Esophagus muscularis mucosa (tissue), 4 donors: ENCODE measurements at regions of chr19 and their contacts with region 1.

Region 1: GRCh38 chr19:18588611-18589379 is at the start of gene REX1BD:
- DNase-seq: peak; percentile 96
- H3K4me3 ChIP-seq: peak within 1 kb of the TSS; percentile 68 to 96 (median 86)
- H3K27ac ChIP-seq: peak within 1 kb of the TSS; percentile 78 to 89 (median 86)
- H3K4me1 ChIP-seq: peaks cover 14 to 38% (median 31%) of the 10 kb centered on the region in 4 donors
- H3K27me3 ChIP-seq: no peaks in the 10 kb centered on the region
- CTCF ChIP-seq: peak; percentile 76 to 87 (median 79)
- EP300 ChIP-seq: no peak
- POLR2A ChIP-seq: no peak
- total RNA-seq, gene REX1BD: 56.1 to 77.7 (median 67.0) TPM

Region 2: GRCh38 chr19:18542936-18543815 is 45.6 kb before region 1 on chr19 and contains the start of gene FKBP8:
- intact Hi-C with region 1: no loop called
- DNase-seq: peak; percentile 97
- H3K4me3 ChIP-seq: peak within 1 kb of the TSS; percentile 78 to 95 (median 86)
- H3K27ac ChIP-seq: peak within 1 kb of the TSS; percentile 93 to 96 (median 94)
- H3K4me1 ChIP-seq: peaks cover 13 to 25% (median 24%) of the 10 kb centered on the region in 4 donors
- H3K27me3 ChIP-seq: no peaks in the 10 kb centered on the region
- CTCF ChIP-seq: no peak
- EP300 ChIP-seq: no peak
- POLR2A ChIP-seq: no peak
- total RNA-seq, gene FKBP8: 420 to 568 (median 430) TPM

Region 3: GRCh38 chr19:18557474-18558201 is 31.2 kb before region 1 on chr19 and contains the start of gene KXD1:
- intact Hi-C with region 1: no loop called
- DNase-seq: peak; percentile 99
- H3K4me3 ChIP-seq: peak within 1 kb of the TSS; percentile 77 to 95 (median 92)
- H3K27ac ChIP-seq: peak within 1 kb of the TSS; percentile 94 to 99 (median 98)
- H3K4me1 ChIP-seq: peaks cover 8 to 43% (median 27%) of the 10 kb centered on the region in 4 donors
- H3K27me3 ChIP-seq: no peaks in the 10 kb centered on the region
- CTCF ChIP-seq: no peak
- EP300 ChIP-seq: peak; percentile 19
- POLR2A ChIP-seq: peak; percentile 77
- total RNA-seq, gene KXD1: 129 to 155 (median 149) TPM

Region 4: GRCh38 chr19:18675779-18676178 is 87.0 kb after region 1 on chr19:
- intact Hi-C with region 1: loop called (anchors 5 kb)
- DNase-seq: no peak
- H3K4me3 ChIP-seq: no peak overlapping the region
- H3K27ac ChIP-seq: no peak overlapping the region
- H3K4me1 ChIP-seq: peaks cover 29 to 72% (median 60%) of the 10 kb centered on the region in 4 donors
- H3K27me3 ChIP-seq: no peaks in the 10 kb centered on the region
- CTCF ChIP-seq: peak in 2 of 3 experiments; percentile 21 to 35
- EP300 ChIP-seq: no peak
- POLR2A ChIP-seq: no peak

Region 5: DNA sequence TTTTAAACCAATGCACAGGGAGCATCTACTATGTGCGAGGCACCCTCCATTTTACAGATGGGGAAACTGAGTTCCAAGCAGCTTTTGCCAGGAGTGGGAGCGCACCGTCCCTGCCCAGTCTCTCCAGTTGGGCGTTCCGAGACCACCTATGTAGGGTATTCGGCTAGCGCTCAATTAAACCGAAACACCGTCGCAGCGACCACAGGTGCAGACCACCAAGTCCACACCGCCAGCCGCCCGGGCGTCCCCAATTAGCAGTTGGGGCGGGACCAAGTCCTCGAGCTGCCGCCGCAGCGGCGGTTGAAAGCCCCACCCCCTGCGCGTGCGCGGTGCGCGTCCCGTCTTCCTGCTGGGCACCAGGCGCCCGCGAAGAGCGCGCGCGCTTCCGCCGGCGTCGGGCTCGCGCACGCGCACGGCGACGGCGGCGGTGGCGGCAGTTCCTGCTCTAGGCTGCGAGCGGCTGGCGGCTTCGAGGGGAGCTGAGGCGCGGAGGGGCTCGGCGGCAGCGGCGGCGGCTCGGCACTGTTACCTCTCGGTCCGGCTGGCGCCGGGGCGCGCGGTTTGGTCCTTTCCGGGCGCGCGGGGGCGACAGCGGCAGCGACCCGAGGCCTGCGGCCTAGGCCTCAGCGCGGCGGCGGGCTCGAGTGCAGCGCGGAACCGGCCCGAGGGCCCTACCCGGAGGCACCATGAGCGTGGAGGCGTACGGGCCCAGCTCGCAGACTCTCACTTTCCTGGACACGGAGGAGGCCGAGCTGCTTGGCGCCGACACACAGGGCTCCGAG is 242.9 kb after region 1 on chr19 and contains the start of gene UPF1:
- intact Hi-C with region 1: loop called (anchors 5 kb)
- DNase-seq: peak; percentile 96
- H3K4me3 ChIP-seq: peak within 1 kb of the TSS; percentile 69 to 99 (median 86)
- H3K27ac ChIP-seq: peak within 1 kb of the TSS; percentile 85 to 91 (median 90)
- H3K4me1 ChIP-seq: peaks cover 40 to 51% (median 44%) of the 10 kb centered on the region in 4 donors
- H3K27me3 ChIP-seq: no peaks in the 10 kb centered on the region
- CTCF ChIP-seq: peak in 2 of 3 experiments; percentile 25 to 32
- EP300 ChIP-seq: no peak
- POLR2A ChIP-seq: peak; percentile 23
- total RNA-seq, gene UPF1: 54.8 to 116 (median 77.4) TPM

Region 6: DNA sequence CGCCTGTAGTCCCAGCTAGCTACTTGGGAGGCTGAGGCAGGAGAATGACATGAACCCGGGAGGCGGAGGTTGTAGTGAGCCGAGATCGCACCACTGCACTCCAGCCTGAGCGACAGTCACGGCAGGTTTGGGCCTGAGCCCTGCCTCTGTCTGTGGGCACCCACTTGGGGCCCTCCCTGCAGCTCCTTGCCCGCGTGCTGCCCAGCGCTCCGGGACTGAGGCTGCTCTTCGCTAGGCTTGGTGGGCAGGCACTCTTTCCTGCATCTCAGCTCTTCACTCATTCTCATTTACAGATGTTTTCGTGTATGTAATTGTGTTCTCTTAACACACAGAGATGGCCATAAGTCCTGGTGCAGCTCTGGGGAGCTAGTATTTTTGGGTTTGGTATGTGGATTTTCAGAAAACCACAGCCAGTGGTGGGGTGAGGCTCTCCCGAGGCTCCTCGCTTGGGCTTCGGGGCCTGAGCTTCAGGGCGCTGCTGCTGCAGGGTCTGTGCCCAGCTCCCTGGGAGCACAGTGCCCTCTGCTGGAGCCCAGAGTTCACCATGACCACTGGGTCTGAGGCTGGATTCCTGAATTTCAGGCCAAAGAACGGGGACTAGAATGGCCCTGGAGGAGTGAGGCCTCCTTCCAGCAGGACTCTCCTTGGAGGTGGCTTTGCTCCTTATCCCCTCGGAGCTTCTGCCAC is 258.2 kb after region 1 on chr19:
- intact Hi-C with region 1: loop called (anchors 5 kb)
- DNase-seq: no peak
- H3K4me3 ChIP-seq: peak overlapping the region in 1 of 4 donors; percentile 7
- H3K27ac ChIP-seq: peak overlapping the region; percentile 75 to 81 (median 76)
- H3K4me1 ChIP-seq: peaks cover 69 to 95% (median 87%) of the 10 kb centered on the region in 4 donors
- H3K27me3 ChIP-seq: no peaks in the 10 kb centered on the region
- CTCF ChIP-seq: peak; percentile 84 to 94 (median 84)
- EP300 ChIP-seq: no peak
- POLR2A ChIP-seq: no peak